GM12878 (cell line): ENCODE measurements at regions of chr9 and their contacts with region 1.

Region 1: GRCh38 chr9:105557771-105558610 is at the start of gene FKTN:
- DNase-seq: peak; percentile 67
- ATAC-seq: peak; percentile 97
- H3K4me3 ChIP-seq: peak within 1 kb of the TSS; percentile 72
- H3K27ac ChIP-seq: peak within 1 kb of the TSS; percentile 95
- H3K4me1 ChIP-seq: peaks cover 4% of the 10 kb centered on the region
- H3K27me3 ChIP-seq: no peaks in the 10 kb centered on the region
- CTCF ChIP-seq: no peak
- EP300 ChIP-seq: no peak
- POLR2A ChIP-seq: peak; percentile 92
- RAD21 ChIP-seq: no peak
- polyA plus RNA-seq, gene FKTN: 3.6 to 5.5 TPM

Region 2: DNA sequence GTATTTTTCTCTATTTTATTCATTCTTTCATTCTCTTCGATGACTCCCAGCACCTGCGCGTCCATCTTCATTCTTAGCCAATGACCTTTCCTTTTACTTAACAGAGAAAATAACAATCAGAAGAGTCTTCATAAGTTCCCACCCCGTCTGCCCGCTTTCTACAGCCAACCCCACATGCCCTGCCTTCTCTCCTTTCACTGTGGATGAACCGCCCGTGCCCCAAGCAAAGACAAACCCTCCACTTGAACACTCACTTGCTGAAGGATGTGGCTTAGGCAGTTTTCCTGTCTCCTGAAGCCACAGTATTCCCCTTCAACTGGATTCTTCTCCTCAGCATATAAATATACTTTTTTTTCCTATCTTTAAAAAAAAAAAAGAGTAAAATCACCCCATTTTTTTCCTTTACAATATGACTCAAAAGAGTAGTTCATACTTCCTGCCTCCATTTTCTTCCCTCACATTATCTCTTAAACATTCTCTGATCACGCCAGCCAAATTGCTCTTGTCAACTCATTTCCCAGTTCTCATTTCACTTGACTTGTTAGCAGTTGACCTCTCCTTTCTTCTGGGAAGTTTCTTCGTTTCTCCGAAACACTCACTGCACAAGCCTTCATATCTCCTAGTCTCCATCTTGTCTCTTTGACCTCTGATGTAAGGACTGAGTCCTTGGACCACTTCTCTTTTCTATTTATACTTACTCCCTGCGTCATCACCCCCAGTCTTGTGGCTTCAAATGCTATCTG is 783.0 kb before region 1 on chr9:
- CTCF ChIA-PET with region 1: no interaction called
- POLR2A ChIA-PET with region 1: no interaction called
- RAD21 ChIA-PET with region 1: no interaction called
- SMC1A ChIA-PET with region 1: no interaction called
- in situ Hi-C with region 1: no loop called
- intact Hi-C with region 1: loop called (anchors 10 kb)
- DNase-seq: peak; percentile 85
- ATAC-seq: peak; percentile 84
- H3K4me3 ChIP-seq: peak overlapping the region; percentile 63
- H3K27ac ChIP-seq: peak overlapping the region; percentile 98
- H3K4me1 ChIP-seq: peaks cover 17% of the 10 kb centered on the region
- H3K27me3 ChIP-seq: no peaks in the 10 kb centered on the region
- CTCF ChIP-seq: no peak
- EP300 ChIP-seq: peak; percentile 13 to 57; a peak in 2 of 4 replicates
- POLR2A ChIP-seq: peak; percentile 73
- RAD21 ChIP-seq: no peak

Region 3: GRCh38 chr9:104895572-104895971 is 662.4 kb before region 1 on chr9:
- CTCF ChIA-PET with region 1: no interaction called
- POLR2A ChIA-PET with region 1: no interaction called
- RAD21 ChIA-PET with region 1: no interaction called
- SMC1A ChIA-PET with region 1: no interaction called
- in situ Hi-C with region 1: no loop called
- intact Hi-C with region 1: no loop called
- DNase-seq: no peak
- ATAC-seq: no peak
- H3K4me3 ChIP-seq: no peak overlapping the region
- H3K27ac ChIP-seq: no peak overlapping the region
- H3K4me1 ChIP-seq: no peaks in the 10 kb centered on the region
- H3K27me3 ChIP-seq: no peaks in the 10 kb centered on the region; a peak in 1 of 4 replicates
- CTCF ChIP-seq: no peak
- EP300 ChIP-seq: no peak
- POLR2A ChIP-seq: no peak
- RAD21 ChIP-seq: no peak

Region 4: DNA sequence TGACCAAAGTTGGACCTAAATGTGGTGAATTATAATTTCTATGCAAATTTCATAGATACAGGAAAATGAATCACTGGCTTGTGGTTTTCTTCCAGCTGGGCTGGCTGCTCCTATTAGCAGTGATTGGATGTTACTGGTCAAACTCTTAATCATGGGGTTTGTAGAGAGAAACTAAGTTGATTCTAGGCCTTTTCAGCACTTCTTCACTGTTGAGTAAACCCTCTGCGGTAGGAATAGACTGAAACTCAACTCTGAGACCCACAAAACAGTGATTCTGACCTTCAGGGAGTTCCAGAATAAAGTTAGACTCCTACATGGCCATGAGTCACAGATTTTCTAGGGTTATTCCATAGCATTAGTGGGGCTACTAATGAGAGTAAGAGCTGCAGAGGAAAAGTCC is 48.0 kb before region 1 on chr9:
- CTCF ChIA-PET with region 1: interaction called, 3 read pairs
- POLR2A ChIA-PET with region 1: no interaction called
- RAD21 ChIA-PET with region 1: interaction called, 3 read pairs
- SMC1A ChIA-PET with region 1: interaction called, 11 read pairs
- in situ Hi-C with region 1: no loop called
- intact Hi-C with region 1: no loop called
- DNase-seq: peak; percentile 54
- ATAC-seq: peak; percentile 78
- H3K4me3 ChIP-seq: no peak overlapping the region
- H3K27ac ChIP-seq: peak overlapping the region; percentile 30
- H3K4me1 ChIP-seq: no peaks in the 10 kb centered on the region; the same call in none of the 2 replicates
- H3K27me3 ChIP-seq: no peaks in the 10 kb centered on the region
- CTCF ChIP-seq: no peak
- EP300 ChIP-seq: peak in 1 of 2 experiments; percentile 12; a peak in 1 of 4 replicates
- POLR2A ChIP-seq: no peak
- RAD21 ChIP-seq: no peak

Region 5: DNA sequence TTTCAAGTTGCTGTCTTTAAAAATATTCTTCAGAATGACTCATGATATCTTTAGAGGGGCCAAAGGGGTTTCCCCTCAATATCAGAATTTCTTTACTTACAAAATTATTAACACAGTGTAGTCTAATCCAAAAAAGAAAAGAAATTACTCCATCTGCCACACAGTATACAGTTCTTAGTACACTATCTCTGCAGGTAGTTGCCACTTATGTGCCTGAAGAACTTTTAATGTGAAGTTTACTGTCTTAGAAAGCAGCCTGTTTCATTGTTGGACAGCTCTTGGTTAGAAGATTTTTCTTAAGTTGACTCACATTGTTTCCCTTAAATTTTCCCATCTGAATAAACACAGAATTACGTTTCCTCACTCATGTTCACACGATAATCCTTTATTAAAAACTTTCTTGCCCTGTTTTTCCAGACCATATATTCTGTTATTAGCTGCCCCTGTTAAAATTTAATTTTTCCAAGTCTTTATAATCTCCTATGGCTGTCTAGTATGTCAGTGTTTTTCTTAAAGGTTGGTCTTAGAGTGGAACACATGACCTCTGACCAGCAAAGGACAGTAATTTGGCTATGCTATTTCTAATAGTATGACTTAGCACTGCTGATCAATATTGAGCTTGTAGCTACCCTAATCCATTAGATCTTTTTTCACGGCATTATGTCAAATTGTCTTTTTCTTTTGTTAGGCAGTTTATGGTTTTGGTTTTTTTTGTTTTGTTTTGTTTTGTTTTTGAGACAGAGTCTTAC is 21.9 kb before region 1 on chr9:
- CTCF ChIA-PET with region 1: no interaction called
- POLR2A ChIA-PET with region 1: no interaction called
- RAD21 ChIA-PET with region 1: interaction called, 3 read pairs
- SMC1A ChIA-PET with region 1: interaction called, 14 read pairs
- in situ Hi-C with region 1: no loop called
- intact Hi-C with region 1: no loop called
- DNase-seq: no peak
- ATAC-seq: peak; percentile 84
- H3K4me3 ChIP-seq: no peak overlapping the region
- H3K27ac ChIP-seq: peak overlapping the region; percentile 49
- H3K4me1 ChIP-seq: peaks cover 8% of the 10 kb centered on the region
- H3K27me3 ChIP-seq: no peaks in the 10 kb centered on the region
- CTCF ChIP-seq: no peak
- EP300 ChIP-seq: no peak
- POLR2A ChIP-seq: no peak
- RAD21 ChIP-seq: no peak

Region 6: GRCh38 chr9:105708405-105708804 is 150.4 kb after region 1 on chr9:
- CTCF ChIA-PET with region 1: no interaction called
- POLR2A ChIA-PET with region 1: no interaction called
- RAD21 ChIA-PET with region 1: no interaction called
- SMC1A ChIA-PET with region 1: no interaction called
- in situ Hi-C with region 1: no loop called
- intact Hi-C with region 1: loop called (anchors 5 kb)
- DNase-seq: no peak
- ATAC-seq: peak; percentile 65
- H3K4me3 ChIP-seq: peak overlapping the region; percentile 54; the same call in 1 of the 2 replicates
- H3K27ac ChIP-seq: peak overlapping the region; percentile 52
- H3K4me1 ChIP-seq: no peaks in the 10 kb centered on the region
- H3K27me3 ChIP-seq: no peaks in the 10 kb centered on the region
- CTCF ChIP-seq: no peak
- EP300 ChIP-seq: no peak
- POLR2A ChIP-seq: no peak
- RAD21 ChIP-seq: no peak